Thyroid gland (tissue), 4 donors: ENCODE measurements at regions of chr7 and their contacts with region 1.

Region 1: GRCh38 chr7:130069978-130070860 is at the start of gene KLHDC10:
- DNase-seq: peak; percentile 97 to 98
- H3K4me3 ChIP-seq: peak within 1 kb of the TSS; percentile 1 to 98 (median 88)
- H3K27ac ChIP-seq: peak within 1 kb of the TSS; percentile 79 to 87 (median 84)
- H3K4me1 ChIP-seq: peaks cover 19 to 23% of the 10 kb centered on the region in 2 donors
- H3K27me3 ChIP-seq: no peaks in the 10 kb centered on the region
- CTCF ChIP-seq: no peak
- POLR2A ChIP-seq: peak; percentile 54 to 77
- total RNA-seq, gene KLHDC10: 27.4 to 41.6 (median 30.8) TPM

Region 2: GRCh38 chr7:130205084-130205947 is 135.1 kb after region 1 on chr7 and contains the start of gene TMEM209:
- intact Hi-C with region 1: loop called (anchors 10 kb)
- DNase-seq: peak; percentile 95
- H3K4me3 ChIP-seq: peak within 1 kb of the TSS; percentile 54 to 100 (median 57)
- H3K27ac ChIP-seq: peak within 1 kb of the TSS; percentile 70 to 91 (median 82)
- H3K4me1 ChIP-seq: peaks cover 0 to 7% of the 10 kb centered on the region in 2 donors
- H3K27me3 ChIP-seq: no peaks in the 10 kb centered on the region
- CTCF ChIP-seq: no peak
- POLR2A ChIP-seq: peak in 1 of 2 donors; percentile 75
- total RNA-seq, gene TMEM209: 19.5 to 28.0 (median 24.5) TPM

Region 3: GRCh38 chr7:130486114-130486958 is 416.1 kb after region 1 on chr7:
- intact Hi-C with region 1: loop called (anchors 10 kb)
- DNase-seq: peak; percentile 88 to 91
- H3K4me3 ChIP-seq: peak overlapping the region in 2 of 3 donors; percentile 50 to 63
- H3K27ac ChIP-seq: peak overlapping the region; percentile 53 to 75 (median 68)
- H3K4me1 ChIP-seq: no peaks in the 10 kb centered on the region
- H3K27me3 ChIP-seq: no peaks in the 10 kb centered on the region
- CTCF ChIP-seq: peak; percentile 53 to 90 (median 74)
- POLR2A ChIP-seq: no peak